ENCODE measurements at regions of chr15 and their contacts with region 1.

Region 1: GRCh38 chr15:88782506-88782905 is 20.7 kb upstream of the ACAN start:
- DNase-seq: no peak

Region 2: DNA sequence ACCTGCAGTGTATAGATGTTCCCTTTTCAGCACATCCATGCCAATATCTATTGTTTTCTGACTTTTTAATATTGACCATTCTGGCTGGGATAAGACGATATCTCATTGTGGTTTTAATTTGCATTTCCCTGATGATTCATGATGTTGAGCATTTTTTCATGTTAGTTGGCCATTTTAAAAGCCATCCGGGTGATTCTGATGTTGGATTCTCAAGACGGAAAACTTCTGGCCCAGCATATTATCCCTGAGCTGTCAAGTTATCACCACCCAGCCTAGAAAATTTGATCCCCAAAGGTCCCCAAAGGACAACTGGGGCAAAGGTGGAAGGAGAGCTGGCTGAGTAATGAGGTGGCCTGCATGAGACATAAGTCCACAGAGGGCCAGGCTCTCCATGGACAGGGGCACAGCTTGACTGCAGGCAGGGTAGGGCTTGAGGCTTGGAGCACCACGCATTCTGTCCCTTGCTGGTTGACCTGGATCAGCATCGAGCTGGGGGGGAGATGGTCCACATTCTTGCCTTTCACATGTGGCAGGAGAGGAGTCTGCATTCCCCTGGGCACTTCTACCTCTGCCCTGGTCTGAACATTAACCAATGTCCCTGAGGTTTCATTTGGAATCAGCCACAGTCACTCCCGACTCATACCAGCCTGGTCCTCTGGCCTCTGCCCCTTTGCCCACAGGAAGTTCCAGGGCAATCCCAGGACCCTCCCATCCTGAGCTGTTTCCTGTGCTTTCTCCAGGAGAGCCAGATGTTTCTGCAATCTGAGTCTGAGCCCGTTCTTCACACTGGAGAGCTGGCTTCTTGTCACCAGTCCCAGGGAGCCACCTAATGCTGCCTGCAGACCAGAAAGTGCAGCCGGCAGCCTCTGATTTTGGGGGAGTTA is 74.5 kb before region 1 on chr15:
- intact Hi-C with region 1: loop called in 1 of 2 experiments (anchors 2 kb)
- DNase-seq: no peak

Measured in posterior vena cava (tissue), 2 donors.